HAP-1 (cell line): ENCODE measurements at regions of chr12 and their contacts with region 1.

Region 1: DNA sequence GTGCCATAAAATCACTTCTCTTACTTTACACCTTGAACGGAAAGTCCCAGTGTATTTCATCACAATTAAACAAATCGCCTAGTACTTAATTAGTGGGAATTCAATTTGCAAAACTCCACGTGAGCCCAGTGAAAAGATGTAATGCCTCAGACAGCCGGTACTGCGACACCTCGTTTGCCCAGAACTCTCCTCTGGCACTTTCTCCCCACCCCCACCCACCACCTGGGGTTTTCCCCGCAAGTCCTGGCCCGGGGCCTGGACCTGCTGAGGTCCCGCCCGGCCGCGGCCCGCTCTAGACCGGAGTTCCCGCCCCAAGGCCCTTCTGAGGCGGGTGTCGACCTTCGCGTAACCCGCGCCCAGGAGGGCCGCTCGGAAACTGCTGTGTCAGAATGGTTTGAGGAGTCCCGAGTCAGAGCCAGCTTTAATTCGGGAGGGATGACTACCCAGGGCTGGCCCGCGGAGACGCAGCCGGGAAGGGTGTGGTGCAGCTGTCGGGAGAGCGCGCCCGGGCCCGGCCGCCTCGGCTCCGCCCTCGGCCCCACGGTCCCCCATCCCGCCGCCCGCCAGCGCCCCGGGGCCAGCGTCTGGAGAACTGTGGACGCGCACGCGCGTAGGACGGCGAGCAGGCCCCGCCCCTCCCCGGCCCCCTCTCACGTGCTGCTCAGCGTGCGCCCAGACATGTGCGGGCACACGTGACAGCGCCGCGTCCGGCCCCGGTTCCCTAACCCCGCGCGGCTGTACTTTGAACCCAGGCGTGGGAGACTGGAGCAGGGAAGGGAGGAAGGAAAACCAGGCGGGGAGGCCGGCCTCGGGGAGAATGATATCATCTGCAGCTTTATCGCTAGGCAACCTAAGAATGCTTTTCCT is 10.8 kb downstream of the BHLHE41 start:
- DNase-seq: peak; percentile 62 to 89
- H3K4me3 ChIP-seq: peak overlapping the region; percentile 38
- H3K4me1 ChIP-seq: peaks cover 14% of the 10 kb centered on the region
- H3K27me3 ChIP-seq: no peaks in the 10 kb centered on the region

Region 2: GRCh38 chr12:25518512-25518911 is 595.6 kb before region 1 on chr12:
- in situ Hi-C with region 1: no loop called
- DNase-seq: no peak
- H3K4me3 ChIP-seq: no peak overlapping the region
- H3K4me1 ChIP-seq: no peaks in the 10 kb centered on the region
- H3K27me3 ChIP-seq: no peaks in the 10 kb centered on the region; the same call in 1 of the 2 replicates

Region 3: GRCh38 chr12:26287671-26288381 is 173.7 kb after region 1 on chr12:
- in situ Hi-C with region 1: no loop called
- DNase-seq: no peak
- H3K4me3 ChIP-seq: no peak overlapping the region
- H3K4me1 ChIP-seq: no peaks in the 10 kb centered on the region
- H3K27me3 ChIP-seq: no peaks in the 10 kb centered on the region

Region 4: DNA sequence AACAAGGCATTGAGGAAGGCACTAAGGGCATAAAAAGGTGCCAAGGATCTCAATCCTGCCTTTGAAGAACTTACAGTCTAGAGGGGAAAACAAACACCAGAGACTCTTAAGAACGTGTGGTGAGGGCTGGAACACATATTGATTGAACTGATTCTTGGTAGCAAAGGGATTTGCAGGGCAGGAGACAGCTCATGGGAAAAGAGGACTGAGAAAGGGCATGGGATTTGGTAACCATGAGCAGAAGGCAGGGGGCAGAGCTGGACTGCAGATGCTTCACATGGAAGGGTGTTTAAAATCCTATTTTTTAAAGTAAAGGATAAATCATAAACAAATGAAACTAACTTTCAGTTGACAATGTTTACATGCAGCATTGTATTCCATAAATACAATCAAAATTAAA is 515.8 kb after region 1 on chr12:
- in situ Hi-C with region 1: loop called (anchors 25 kb)
- DNase-seq: no peak
- H3K4me3 ChIP-seq: no peak overlapping the region
- H3K4me1 ChIP-seq: peaks cover 27% of the 10 kb centered on the region
- H3K27me3 ChIP-seq: no peaks in the 10 kb centered on the region